ENCODE measurements at regions of chr2 and their contacts with region 1.

Region 1: GRCh38 chr2:223860809-223861738 is 23.7 kb upstream of the AP1S3 start:
- DNase-seq: no peak
- ATAC-seq: no peak
- H3K4me3 Mint-ChIP-seq: no peak overlapping the region
- H3K27ac Mint-ChIP-seq: no peak overlapping the region
- H3K4me1 Mint-ChIP-seq: peaks cover 17% of the 10 kb centered on the region
- H3K27me3 Mint-ChIP-seq: no peaks in the 10 kb centered on the region
- CTCF ChIP-seq: no peak

Region 2: GRCh38 chr2:223727562-223727961 is 133.5 kb before region 1 on chr2:
- CTCF ChIA-PET with region 1: interaction called, 7 read pairs
- POLR2A ChIA-PET with region 1: no interaction called
- intact Hi-C with region 1: loop called (anchors 1 kb)
- DNase-seq: no peak
- ATAC-seq: peak; percentile 65
- H3K4me3 Mint-ChIP-seq: no peak overlapping the region
- H3K27ac Mint-ChIP-seq: no peak overlapping the region
- H3K4me1 Mint-ChIP-seq: no peaks in the 10 kb centered on the region
- H3K27me3 Mint-ChIP-seq: no peaks in the 10 kb centered on the region
- CTCF ChIP-seq: peak; percentile 20

Region 3: GRCh38 chr2:223779877-223780276 is 81.2 kb before region 1 on chr2:
- CTCF ChIA-PET with region 1: interaction called, 4 read pairs
- POLR2A ChIA-PET with region 1: no interaction called
- intact Hi-C with region 1: loop called (anchors 1 kb)
- DNase-seq: peak; percentile 21
- ATAC-seq: peak; percentile 90
- H3K4me3 Mint-ChIP-seq: no peak overlapping the region
- H3K27ac Mint-ChIP-seq: peak overlapping the region; percentile 41
- H3K4me1 Mint-ChIP-seq: peaks cover 21% of the 10 kb centered on the region
- H3K27me3 Mint-ChIP-seq: no peaks in the 10 kb centered on the region
- CTCF ChIP-seq: no peak

Region 4: GRCh38 chr2:223909001-223909741 is 48.1 kb after region 1 on chr2:
- CTCF ChIA-PET with region 1: no interaction called
- POLR2A ChIA-PET with region 1: no interaction called
- intact Hi-C with region 1: no loop called
- DNase-seq: no peak
- ATAC-seq: no peak
- H3K4me3 Mint-ChIP-seq: no peak overlapping the region
- H3K27ac Mint-ChIP-seq: peak overlapping the region; percentile 43
- H3K4me1 Mint-ChIP-seq: peaks cover 30% of the 10 kb centered on the region
- H3K27me3 Mint-ChIP-seq: no peaks in the 10 kb centered on the region
- CTCF ChIP-seq: no peak